GM12878 (cell line): ENCODE measurements at regions of chr10 and their contacts with region 1.

Region 1: DNA sequence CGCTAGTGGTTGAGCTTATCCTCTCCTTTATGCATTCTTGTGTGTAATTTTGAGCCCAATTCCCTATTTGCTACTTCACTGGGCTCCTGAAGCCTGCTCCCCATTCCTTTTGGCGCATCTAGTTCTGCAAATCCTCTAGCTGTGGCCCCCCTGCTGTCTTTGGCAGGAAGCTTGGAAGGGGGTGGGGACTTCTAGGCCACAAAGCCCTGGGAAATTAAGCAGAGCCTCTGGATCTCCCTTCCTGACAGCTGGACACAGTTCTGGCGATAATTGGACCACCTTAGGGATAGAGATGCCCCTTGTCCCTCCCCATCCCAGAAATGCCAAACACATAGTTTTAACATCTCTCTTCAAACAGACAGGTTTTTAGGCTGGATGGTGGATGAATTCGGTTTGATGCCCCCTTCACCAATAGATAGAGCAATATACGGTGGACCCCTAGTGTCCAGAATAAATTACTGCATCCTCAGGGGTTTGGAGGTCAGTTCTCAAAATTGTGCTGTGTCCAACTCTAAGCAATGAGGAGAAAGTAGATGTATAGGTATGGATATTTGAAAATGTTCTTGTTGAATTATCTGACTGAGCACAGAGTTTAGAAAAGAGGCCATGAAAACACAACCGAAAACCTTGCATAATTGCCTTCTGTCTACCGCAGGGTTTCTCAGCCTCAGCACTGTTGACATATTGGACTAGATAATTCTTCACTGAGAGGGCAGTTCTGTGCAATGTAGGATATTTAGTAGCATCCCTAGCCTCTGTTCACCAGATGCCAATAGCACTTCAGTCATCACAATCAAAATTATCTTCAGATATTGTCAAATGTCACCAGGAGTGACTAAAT is 75.5 kb downstream of the PAPSS2 start:
- DNase-seq: no peak
- ATAC-seq: peak; percentile 93
- H3K4me3 ChIP-seq: no peak overlapping the region
- H3K27ac ChIP-seq: no peak overlapping the region
- H3K4me1 ChIP-seq: no peaks in the 10 kb centered on the region
- H3K27me3 ChIP-seq: peaks cover 0 to 3% of the 10 kb centered on the region in 2 experiments; a peak in 1 of 4 replicates
- CTCF ChIP-seq: peak; percentile 72 to 81 (median 78)
- EP300 ChIP-seq: no peak
- POLR2A ChIP-seq: no peak
- RAD21 ChIP-seq: peak; percentile 89

Region 2: GRCh38 chr10:87531908-87532622 is 203.1 kb before region 1 on chr10:
- CTCF ChIA-PET with region 1: interaction called, 30 read pairs
- POLR2A ChIA-PET with region 1: no interaction called
- RAD21 ChIA-PET with region 1: interaction called, 20 read pairs
- SMC1A ChIA-PET with region 1: interaction called, 7 read pairs
- in situ Hi-C with region 1: loop called (anchors 25 kb)
- intact Hi-C with region 1: loop called (anchors 1 kb)
- DNase-seq: no peak
- ATAC-seq: no peak
- H3K4me3 ChIP-seq: no peak overlapping the region
- H3K27ac ChIP-seq: no peak overlapping the region
- H3K4me1 ChIP-seq: peaks cover 17% of the 10 kb centered on the region
- H3K27me3 ChIP-seq: no peaks in the 10 kb centered on the region
- CTCF ChIP-seq: no peak
- EP300 ChIP-seq: no peak
- POLR2A ChIP-seq: no peak
- RAD21 ChIP-seq: no peak

Region 3: DNA sequence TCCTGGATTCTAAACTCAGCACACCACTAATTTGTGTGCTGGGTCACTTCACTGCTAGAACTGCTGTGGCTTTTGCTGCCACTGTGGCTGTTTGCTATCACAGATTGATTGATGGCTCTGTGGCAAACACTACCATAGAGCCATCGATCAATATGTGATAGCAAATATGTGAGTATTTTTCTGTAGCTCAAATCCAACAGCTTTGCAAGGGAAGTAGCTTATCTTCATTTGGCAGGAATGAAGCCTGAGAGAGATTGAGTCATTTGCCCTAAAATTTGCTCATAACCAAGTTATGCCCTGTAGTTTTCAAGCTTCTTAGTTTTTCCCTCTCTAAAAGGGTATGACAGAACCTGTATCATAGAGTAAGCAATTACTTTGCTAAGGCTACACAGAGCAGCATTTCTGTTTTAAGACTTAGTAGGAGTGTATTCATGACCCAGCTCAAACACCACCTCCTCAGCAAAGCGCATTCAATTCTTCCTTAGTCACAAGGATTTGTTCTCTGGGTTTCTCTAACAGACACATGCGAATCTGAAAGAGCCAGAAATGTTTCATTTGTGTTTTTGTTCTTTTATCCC is 187.4 kb before region 1 on chr10:
- CTCF ChIA-PET with region 1: no interaction called
- POLR2A ChIA-PET with region 1: no interaction called
- RAD21 ChIA-PET with region 1: no interaction called
- SMC1A ChIA-PET with region 1: interaction called, 5 read pairs
- in situ Hi-C with region 1: loop called (anchors 25 kb)
- intact Hi-C with region 1: no loop called
- DNase-seq: no peak
- ATAC-seq: no peak
- H3K4me3 ChIP-seq: no peak overlapping the region
- H3K27ac ChIP-seq: no peak overlapping the region
- H3K4me1 ChIP-seq: no peaks in the 10 kb centered on the region
- H3K27me3 ChIP-seq: no peaks in the 10 kb centered on the region
- CTCF ChIP-seq: no peak
- EP300 ChIP-seq: no peak
- POLR2A ChIP-seq: no peak
- RAD21 ChIP-seq: no peak

Region 4: DNA sequence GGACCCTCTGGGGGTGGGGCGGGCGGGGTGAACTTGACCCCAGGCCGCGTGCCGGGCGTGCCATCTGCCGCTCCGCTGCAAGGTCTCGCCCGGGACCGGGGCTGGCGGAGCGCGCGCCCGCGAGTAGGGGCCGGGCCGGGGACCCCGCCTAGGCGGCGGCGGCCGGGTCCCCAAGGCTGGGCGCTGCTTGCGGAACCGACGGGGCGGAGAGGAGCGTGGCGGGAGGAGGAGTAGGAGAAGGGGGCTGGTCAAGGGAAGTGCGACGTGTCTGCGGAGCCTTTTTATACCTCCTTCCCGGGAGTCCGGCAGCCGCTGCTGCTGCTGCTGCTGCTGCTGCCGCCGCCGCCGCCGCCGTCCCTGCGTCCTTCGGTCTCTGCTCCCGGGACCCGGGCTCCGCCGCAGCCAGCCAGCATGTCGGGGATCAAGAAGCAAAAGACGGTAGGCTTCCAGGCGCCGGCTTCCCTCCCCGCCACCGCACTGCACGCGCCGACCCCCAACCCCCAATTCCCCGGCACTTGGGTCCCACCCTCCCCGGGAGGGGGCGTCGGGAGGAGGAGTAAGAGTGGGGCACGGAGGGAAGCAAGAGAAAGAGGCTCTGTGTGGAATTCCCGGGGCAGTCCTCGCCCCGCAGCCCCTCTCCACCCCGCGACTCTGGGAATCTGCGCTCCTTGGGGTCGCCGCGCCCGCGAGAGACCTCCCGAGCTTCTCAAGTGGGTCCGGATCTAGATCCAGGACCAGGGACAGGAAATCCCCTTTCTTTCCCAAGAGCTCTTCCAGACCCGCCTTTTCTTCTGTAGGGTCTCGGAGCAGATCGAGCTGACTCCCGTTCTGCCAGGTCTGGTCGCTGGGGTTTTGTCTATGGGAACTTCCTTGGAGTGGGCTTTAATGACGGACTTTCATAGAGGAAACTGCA is 75.4 kb before region 1 on chr10 and contains the start of gene PAPSS2:
- CTCF ChIA-PET with region 1: interaction called, 3 read pairs
- POLR2A ChIA-PET with region 1: no interaction called
- RAD21 ChIA-PET with region 1: no interaction called
- SMC1A ChIA-PET with region 1: interaction called, 4 read pairs
- in situ Hi-C with region 1: loop called (anchors 5 kb)
- intact Hi-C with region 1: loop called (anchors 1 kb)
- DNase-seq: no peak
- ATAC-seq: peak; percentile 65
- H3K4me3 ChIP-seq: peak within 1 kb of the TSS; percentile 74
- H3K27ac ChIP-seq: no peak within 1 kb of the TSS
- H3K4me1 ChIP-seq: no peaks in the 10 kb centered on the region; the same call in 1 of the 2 replicates
- H3K27me3 ChIP-seq: peaks cover 3 to 4% of the 10 kb centered on the region in 2 experiments
- CTCF ChIP-seq: no peak
- EP300 ChIP-seq: no peak
- POLR2A ChIP-seq: 0 out of 2 replicates have a peak, but pooled peaks have one; percentile 22
- RAD21 ChIP-seq: no peak
- polyA plus RNA-seq, gene PAPSS2: 0.29 to 0.31 TPM